Mammary epithelial cell (primary cell): ENCODE measurements at regions of chr4 and their contacts with region 1.

Region 1: GRCh38 chr4:155946486-155946885 is 7.2 kb downstream of the CTSO start:
- DNase-seq: no peak
- H3K4me3 ChIP-seq: no peak overlapping the region
- H3K27ac ChIP-seq: no peak overlapping the region
- H3K4me1 ChIP-seq: no peaks in the 10 kb centered on the region
- H3K27me3 ChIP-seq: no peaks in the 10 kb centered on the region
- CTCF ChIP-seq: no peak

Region 2: GRCh38 chr4:155809835-155810234 is 136.7 kb before region 1 on chr4:
- CTCF ChIA-PET with region 1: no interaction called
- dilution Hi-C with region 1: no loop called
- in situ Hi-C with region 1: loop called (anchors 10 kb)
- intact Hi-C with region 1: no loop called
- DNase-seq: peak; percentile 59
- H3K4me3 ChIP-seq: no peak overlapping the region
- H3K27ac ChIP-seq: no peak overlapping the region
- H3K4me1 ChIP-seq: no peaks in the 10 kb centered on the region
- H3K27me3 ChIP-seq: no peaks in the 10 kb centered on the region
- CTCF ChIP-seq: peak; percentile 48 to 68

Region 3: GRCh38 chr4:156084373-156084772 is 137.9 kb after region 1 on chr4:
- CTCF ChIA-PET with region 1: no interaction called
- dilution Hi-C with region 1: no loop called
- in situ Hi-C with region 1: no loop called
- intact Hi-C with region 1: no loop called
- DNase-seq: no peak
- H3K4me3 ChIP-seq: no peak overlapping the region
- H3K27ac ChIP-seq: no peak overlapping the region
- H3K4me1 ChIP-seq: no peaks in the 10 kb centered on the region
- H3K27me3 ChIP-seq: peaks cover 2% of the 10 kb centered on the region
- CTCF ChIP-seq: no peak